Caco-2 (cell line): ENCODE measurements at regions of chr2 and their contacts with region 1.

Region 1: GRCh38 chr2:127675331-127676261 is at the start of gene LIMS2:
- DNase-seq: peak; percentile 67 to 74
- H3K4me3 ChIP-seq: peak within 1 kb of the TSS; percentile 56
- H3K4me3 Mint-ChIP-seq: peak within 1 kb of the TSS; percentile 83
- H3K27ac Mint-ChIP-seq: no peak within 1 kb of the TSS
- H3K4me1 ChIP-seq: peaks cover 6% of the 10 kb centered on the region; the same call in 1 of the 2 replicates
- H3K4me1 Mint-ChIP-seq: no peaks in the 10 kb centered on the region
- H3K27me3 ChIP-seq: peaks cover 1% of the 10 kb centered on the region; the same call in 1 of the 2 replicates
- H3K27me3 Mint-ChIP-seq: peaks cover 8% of the 10 kb centered on the region
- CTCF ChIP-seq: peak in 1 of 2 experiments; percentile 36
- total RNA-seq, gene LIMS2: 9.6 and 10.0 TPM in 2 replicates

Region 2: DNA sequence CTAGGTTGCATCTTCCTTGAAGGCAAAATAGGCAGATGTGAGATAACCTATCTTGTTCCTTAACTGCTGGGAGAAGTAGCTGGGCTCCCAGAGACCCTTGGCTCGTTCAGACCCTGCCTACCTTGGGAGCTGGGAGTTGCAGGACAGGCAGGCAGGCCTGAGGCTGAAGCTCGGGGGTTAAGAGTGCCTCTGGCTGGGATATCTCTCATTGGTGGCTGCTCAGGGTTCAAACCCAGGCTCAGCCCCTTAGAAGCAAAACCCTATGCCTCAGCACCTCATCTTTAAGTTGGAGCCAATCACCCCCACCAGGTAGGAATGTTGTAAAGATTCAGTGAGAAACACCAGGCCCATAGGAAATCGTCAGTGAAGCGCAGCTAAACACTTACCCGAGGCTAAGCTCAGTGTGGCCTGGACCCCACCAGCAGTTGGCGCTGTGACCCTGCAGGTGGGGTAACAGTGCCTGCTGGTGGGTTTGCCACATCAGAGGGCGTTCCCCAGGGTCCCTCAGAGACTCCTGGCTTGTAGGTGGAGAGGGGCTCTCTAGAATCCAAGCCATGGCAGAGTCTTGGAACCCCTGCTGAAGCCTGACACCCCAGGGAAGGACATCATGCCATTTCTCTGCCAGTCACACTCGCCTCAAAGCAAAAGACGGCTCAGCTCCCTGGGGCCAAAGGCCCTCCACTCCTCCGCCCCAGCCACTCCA is 84.2 kb before region 1 on chr2:
- CTCF ChIA-PET with region 1: interaction called, 23 read pairs
- POLR2A ChIA-PET with region 1: no interaction called
- intact Hi-C with region 1: loop called (anchors 1 kb)
- DNase-seq: peak; percentile 72 to 76
- H3K4me3 ChIP-seq: no peak overlapping the region
- H3K4me3 Mint-ChIP-seq: no peak overlapping the region
- H3K27ac Mint-ChIP-seq: no peak overlapping the region
- H3K4me1 ChIP-seq: no peaks in the 10 kb centered on the region
- H3K4me1 Mint-ChIP-seq: no peaks in the 10 kb centered on the region
- H3K27me3 ChIP-seq: no peaks in the 10 kb centered on the region
- H3K27me3 Mint-ChIP-seq: peaks cover 7% of the 10 kb centered on the region
- CTCF ChIP-seq: peak; percentile 86 to 99

Region 3: GRCh38 chr2:127649684-127650040 is 25.9 kb before region 1 on chr2:
- CTCF ChIA-PET with region 1: interaction called, 4 read pairs
- POLR2A ChIA-PET with region 1: no interaction called
- intact Hi-C with region 1: loop called (anchors 1 kb)
- DNase-seq: peak; percentile 87 to 90
- H3K4me3 ChIP-seq: no peak overlapping the region
- H3K4me3 Mint-ChIP-seq: no peak overlapping the region
- H3K27ac Mint-ChIP-seq: no peak overlapping the region
- H3K4me1 ChIP-seq: peaks cover 11% of the 10 kb centered on the region
- H3K4me1 Mint-ChIP-seq: no peaks in the 10 kb centered on the region
- H3K27me3 ChIP-seq: no peaks in the 10 kb centered on the region
- H3K27me3 Mint-ChIP-seq: no peaks in the 10 kb centered on the region
- CTCF ChIP-seq: peak; percentile 82 to 86

Region 4: DNA sequence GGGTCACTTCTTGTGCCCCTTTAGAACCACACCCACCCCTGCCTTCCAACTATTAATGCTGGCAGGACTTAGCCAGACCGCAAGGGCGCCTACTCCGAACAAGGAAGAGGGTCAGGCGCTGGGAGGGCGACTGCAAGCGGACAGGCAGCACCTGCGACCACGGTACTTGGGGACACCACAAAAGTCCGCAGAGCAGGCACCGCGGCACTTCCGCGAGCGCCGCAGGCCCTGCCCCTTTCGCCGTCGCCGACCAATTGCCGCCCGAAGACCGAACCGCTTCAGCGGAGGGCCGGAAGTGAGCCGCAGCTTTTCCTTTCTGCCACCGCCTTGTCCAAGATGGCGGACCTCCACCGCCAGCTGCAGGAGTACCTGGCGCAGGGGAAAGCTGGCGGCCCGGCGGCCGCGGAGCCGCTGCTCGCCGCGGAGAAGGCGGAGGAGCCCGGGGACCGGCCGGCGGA is 25.6 kb after region 1 on chr2 and contains the start of gene SFT2D3:
- CTCF ChIA-PET with region 1: interaction called, 6 read pairs
- POLR2A ChIA-PET with region 1: interaction called, 11 read pairs
- intact Hi-C with region 1: no loop called
- DNase-seq: peak; percentile 95 to 96
- H3K4me3 ChIP-seq: peak within 1 kb of the TSS; percentile 51
- H3K4me3 Mint-ChIP-seq: peak within 1 kb of the TSS; percentile 98
- H3K27ac Mint-ChIP-seq: peak within 1 kb of the TSS; percentile 99
- H3K4me1 ChIP-seq: peaks cover 10% of the 10 kb centered on the region
- H3K4me1 Mint-ChIP-seq: peaks cover 16% of the 10 kb centered on the region
- H3K27me3 ChIP-seq: no peaks in the 10 kb centered on the region
- H3K27me3 Mint-ChIP-seq: no peaks in the 10 kb centered on the region
- CTCF ChIP-seq: no peak
- total RNA-seq, gene SFT2D3: 12.0 and 12.2 TPM in 2 replicates